Stomach (tissue), 19 donors: ENCODE measurements at regions of chr1 and their contacts with region 1.

Region 1: GRCh38 chr1:119367427-119368124 is 1.0 kb upstream of the HAO2 start:
- DNase-seq: peak in 1 of 2 donors; percentile 59
- H3K4me3 ChIP-seq: no peak overlapping the region
- H3K27ac ChIP-seq: no peak overlapping the region
- H3K4me1 ChIP-seq: no peaks in the 10 kb centered on the region
- H3K27me3 ChIP-seq: no peaks in the 10 kb centered on the region
- CTCF ChIP-seq: peak in 5 of 7 experiments; percentile 38 to 81 (median 75)
- EP300 ChIP-seq: no peak
- POLR2A ChIP-seq: no peak

Region 2: DNA sequence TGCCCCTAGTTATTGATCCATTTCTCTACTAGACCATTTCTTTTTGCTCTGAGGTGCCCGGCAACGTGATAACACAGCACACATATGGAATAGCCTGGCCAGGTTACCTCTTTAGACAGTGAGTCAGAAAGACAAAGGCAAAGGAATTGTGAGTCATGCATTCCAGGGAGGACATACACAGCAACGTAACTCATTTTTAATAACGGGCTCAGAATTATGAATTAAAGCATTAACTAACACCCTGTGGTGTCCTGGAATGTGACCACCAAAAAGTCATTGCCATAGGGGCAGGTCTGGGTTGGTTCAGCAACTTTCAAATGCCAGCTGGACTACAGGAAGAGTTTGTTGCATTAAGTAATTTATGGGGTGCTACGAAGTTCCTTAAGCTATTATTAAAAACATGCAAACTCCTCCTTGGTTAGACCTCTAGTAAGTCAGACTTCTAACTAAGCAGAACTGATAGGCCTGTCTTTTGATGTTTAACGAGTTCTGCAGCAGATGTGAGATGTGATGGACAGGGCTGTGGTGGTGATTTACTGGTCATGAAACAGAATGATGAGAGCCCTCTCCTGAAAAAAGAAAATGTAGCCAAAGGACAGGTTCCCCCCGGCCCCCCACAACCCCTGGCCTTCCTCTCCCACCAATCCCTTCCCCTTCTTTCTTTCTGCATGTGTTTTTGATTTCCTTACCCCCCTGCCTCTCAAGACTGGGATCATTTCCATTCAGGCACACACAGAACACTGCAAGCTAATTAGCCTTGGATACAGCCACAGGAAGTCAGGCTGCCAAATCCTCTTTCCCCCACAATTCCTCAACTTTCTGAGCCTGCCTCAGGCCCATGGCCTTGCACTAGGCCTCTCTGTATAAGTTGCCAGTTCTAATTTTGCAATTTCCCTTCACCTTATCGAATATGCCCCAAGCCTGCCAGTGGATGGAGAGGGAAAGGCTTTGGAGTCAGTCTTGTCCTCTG is 87.8 kb before region 1 on chr1:
- intact Hi-C with region 1: loop called (anchors 5 kb)
- DNase-seq: peak in 1 of 2 donors; percentile 57
- H3K4me3 ChIP-seq: no peak overlapping the region
- H3K27ac ChIP-seq: no peak overlapping the region
- H3K4me1 ChIP-seq: peaks cover 0 to 4% (median 0%) of the 10 kb centered on the region in 4 donors
- H3K27me3 ChIP-seq: no peaks in the 10 kb centered on the region
- CTCF ChIP-seq: no peak
- EP300 ChIP-seq: no peak
- POLR2A ChIP-seq: no peak

Region 3: GRCh38 chr1:119516678-119517077 is 149.1 kb after region 1 on chr1:
- intact Hi-C with region 1: no loop called
- DNase-seq: no peak
- H3K4me3 ChIP-seq: no peak overlapping the region
- H3K27ac ChIP-seq: no peak overlapping the region
- H3K4me1 ChIP-seq: no peaks in the 10 kb centered on the region
- H3K27me3 ChIP-seq: no peaks in the 10 kb centered on the region
- CTCF ChIP-seq: no peak
- EP300 ChIP-seq: no peak
- POLR2A ChIP-seq: no peak